ENCODE measurements at regions of chrX and their contacts with region 1.

Region 1: DNA sequence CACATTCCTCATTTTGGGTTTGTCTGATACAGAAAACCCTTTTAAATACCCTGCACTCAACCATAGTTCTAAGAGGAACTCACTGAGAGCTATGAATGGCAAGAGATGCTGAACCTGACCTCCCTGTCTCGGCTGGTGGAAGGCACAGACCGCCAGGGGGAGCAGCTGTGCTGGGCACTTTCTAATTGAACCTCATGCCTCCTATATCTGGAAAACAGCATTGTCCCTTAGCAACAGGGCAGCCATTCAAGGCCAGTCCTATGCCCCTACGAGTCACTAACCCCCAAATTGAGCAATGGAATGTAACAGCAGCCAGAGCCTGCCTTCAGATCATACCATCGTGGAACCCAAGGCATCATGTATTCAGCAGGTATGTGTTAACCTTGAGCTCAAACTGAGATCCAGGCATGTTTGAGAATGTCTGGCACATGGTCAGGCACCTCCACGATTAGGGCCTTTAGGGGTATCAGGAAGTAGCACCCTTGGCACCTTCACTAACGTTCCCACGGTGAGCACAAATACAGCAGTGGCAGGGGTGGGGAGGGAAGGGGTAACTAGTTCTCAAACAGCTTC is 5.1 kb downstream of the USP27X start:
- DNase-seq: no peak

Region 2: DNA sequence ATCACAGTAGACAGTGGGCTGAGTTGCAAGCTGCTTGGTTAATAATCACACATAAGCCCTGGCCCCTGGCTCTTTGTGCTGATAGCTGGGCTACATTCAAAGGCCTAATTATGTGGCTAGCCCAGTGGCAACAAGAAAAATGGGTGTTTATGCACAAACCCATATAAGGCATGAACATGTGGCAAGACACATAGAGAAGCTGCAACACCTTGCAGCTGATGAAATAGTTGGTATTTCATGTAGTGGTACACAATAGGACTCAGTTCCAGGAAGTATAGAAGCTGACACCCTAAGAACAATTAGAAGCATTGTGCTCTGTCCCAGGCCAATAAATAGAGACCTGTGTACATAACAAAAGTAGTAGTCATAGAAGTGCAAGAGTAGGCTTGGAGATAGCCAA is 1798.3 kb before region 1 on chrX:
- intact Hi-C with region 1: loop called in 1 of 2 experiments (anchors 10 kb)
- DNase-seq: no peak

Region 3: GRCh38 chrX:49829016-49829415 is 55.4 kb before region 1 on chrX and contains the start of gene PAGE4:
- intact Hi-C with region 1: loop called in 1 of 2 experiments (anchors 10 kb)
- DNase-seq: no peak
- total RNA-seq, gene PAGE4: not detected

Region 4: GRCh38 chrX:49840679-49841078 is 43.7 kb before region 1 on chrX:
- intact Hi-C with region 1: no loop called
- DNase-seq: peak; percentile 79